Activated T-helper 2 cell treated with anti-CD3 and anti-CD28 coated beads, Interferon-gamma antibody, Interleukin-2, Interleukin-4, amounts not matched to agents 10 μg/mL and 5 μg/mL and 100 μg/mL, durations not matched to agents 14 hours and 24 hours and 36 hours (primary cell): ENCODE measurements at regions of chr2 and their contacts with region 1.

Region 1: GRCh38 chr2:97849881-97850528 is 136.6 kb downstream of the ZAP70 start:
- DNase-seq: no peak
- H3K4me3 Mint-ChIP-seq: peak overlapping the region; percentile 20
- H3K27ac Mint-ChIP-seq: peak overlapping the region; percentile 75
- H3K4me1 Mint-ChIP-seq: peaks cover 51% of the 10 kb centered on the region
- H3K27me3 Mint-ChIP-seq: no peaks in the 10 kb centered on the region

Region 2: DNA sequence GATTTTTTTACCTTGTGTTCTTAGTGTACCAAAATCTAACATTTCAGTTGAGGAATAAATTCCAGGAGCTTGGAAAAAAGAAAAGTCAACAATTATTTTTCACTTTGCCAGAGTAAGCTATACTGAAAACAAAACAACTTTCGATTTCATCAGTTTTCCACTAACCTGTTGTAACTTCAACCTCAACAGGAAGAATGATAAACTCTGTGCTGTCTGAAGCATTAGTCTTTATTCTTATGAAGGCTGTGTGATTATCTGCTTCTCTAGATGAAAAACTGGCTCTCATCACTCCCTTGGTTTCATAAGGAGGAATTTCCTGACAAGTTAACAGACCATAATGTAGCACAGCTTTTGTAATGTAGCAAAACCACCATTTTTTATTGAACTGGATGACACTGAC is 15.4 kb before region 1 on chr2:
- intact Hi-C with region 1: loop called (anchors 2 kb)
- DNase-seq: no peak
- H3K4me3 Mint-ChIP-seq: no peak overlapping the region
- H3K27ac Mint-ChIP-seq: no peak overlapping the region
- H3K4me1 Mint-ChIP-seq: peaks cover 15% of the 10 kb centered on the region
- H3K27me3 Mint-ChIP-seq: no peaks in the 10 kb centered on the region

Region 3: DNA sequence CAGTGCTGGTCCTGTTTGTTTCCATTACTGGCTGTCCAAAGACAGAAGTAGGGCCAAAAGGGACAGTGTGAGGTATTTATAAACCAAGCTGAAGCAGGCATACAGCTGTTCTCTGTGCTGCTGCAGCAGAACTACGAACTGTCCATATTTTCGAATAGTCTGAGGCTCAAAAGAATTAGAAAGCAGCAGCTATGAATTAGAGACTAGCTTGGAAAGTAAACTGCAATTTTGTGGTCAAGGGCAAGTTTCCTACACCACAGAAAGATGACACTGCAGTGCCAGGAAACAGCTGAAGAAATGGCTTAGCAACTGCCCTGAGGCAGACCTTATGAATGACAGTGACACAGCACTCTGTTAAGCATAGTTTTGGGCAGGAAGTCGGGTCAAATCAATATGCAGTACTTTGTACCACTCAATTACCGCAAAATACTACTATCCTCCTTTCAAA is 20.4 kb after region 1 on chr2:
- intact Hi-C with region 1: loop called (anchors 1 kb)
- DNase-seq: peak; percentile 68
- H3K4me3 Mint-ChIP-seq: peak overlapping the region; percentile 48
- H3K27ac Mint-ChIP-seq: peak overlapping the region; percentile 37
- H3K4me1 Mint-ChIP-seq: peaks cover 30% of the 10 kb centered on the region
- H3K27me3 Mint-ChIP-seq: no peaks in the 10 kb centered on the region

Region 4: GRCh38 chr2:97911206-97911921 is 61.4 kb after region 1 on chr2:
- intact Hi-C with region 1: loop called (anchors 2 kb)
- DNase-seq: no peak
- H3K4me3 Mint-ChIP-seq: no peak overlapping the region
- H3K27ac Mint-ChIP-seq: peak overlapping the region; percentile 22
- H3K4me1 Mint-ChIP-seq: peaks cover 61% of the 10 kb centered on the region
- H3K27me3 Mint-ChIP-seq: no peaks in the 10 kb centered on the region

Region 5: GRCh38 chr2:97966518-97967215 is 116.7 kb after region 1 on chr2:
- intact Hi-C with region 1: loop called (anchors 2 kb)
- DNase-seq: no peak
- H3K4me3 Mint-ChIP-seq: no peak overlapping the region
- H3K27ac Mint-ChIP-seq: no peak overlapping the region
- H3K4me1 Mint-ChIP-seq: peaks cover 56% of the 10 kb centered on the region
- H3K27me3 Mint-ChIP-seq: no peaks in the 10 kb centered on the region

Region 6: GRCh38 chr2:97995734-97996624 is 146.0 kb after region 1 on chr2 and contains the start of gene TMEM131:
- intact Hi-C with region 1: loop called (anchors 5 kb)
- DNase-seq: peak; percentile 95
- H3K4me3 Mint-ChIP-seq: peak within 1 kb of the TSS; percentile 96
- H3K27ac Mint-ChIP-seq: peak within 1 kb of the TSS; percentile 96
- H3K4me1 Mint-ChIP-seq: peaks cover 30% of the 10 kb centered on the region
- H3K27me3 Mint-ChIP-seq: peaks cover 8% of the 10 kb centered on the region
- total RNA-seq, gene TMEM131: 39.3 and 39.9 TPM in 2 replicates

Region 7: GRCh38 chr2:98311721-98312120 is 461.7 kb after region 1 on chr2:
- intact Hi-C with region 1: no loop called
- DNase-seq: no peak
- H3K4me3 Mint-ChIP-seq: no peak overlapping the region
- H3K27ac Mint-ChIP-seq: no peak overlapping the region
- H3K4me1 Mint-ChIP-seq: no peaks in the 10 kb centered on the region
- H3K27me3 Mint-ChIP-seq: peaks cover 2% of the 10 kb centered on the region